GM12878 (cell line): ENCODE measurements at regions of chr15 and their contacts with region 1.

Region 1: GRCh38 chr15:62125773-62126172 is 39.3 kb downstream of the C2CD4B start:
- DNase-seq: no peak
- ATAC-seq: no peak
- H3K4me3 ChIP-seq: no peak overlapping the region
- H3K27ac ChIP-seq: no peak overlapping the region
- H3K4me1 ChIP-seq: no peaks in the 10 kb centered on the region
- H3K27me3 ChIP-seq: no peaks in the 10 kb centered on the region
- CTCF ChIP-seq: 0 out of 6 replicates have a peak, but pooled peaks of 1 of the 3 experiments have one; percentile 8
- EP300 ChIP-seq: no peak
- POLR2A ChIP-seq: no peak
- RAD21 ChIP-seq: no peak

Region 2: DNA sequence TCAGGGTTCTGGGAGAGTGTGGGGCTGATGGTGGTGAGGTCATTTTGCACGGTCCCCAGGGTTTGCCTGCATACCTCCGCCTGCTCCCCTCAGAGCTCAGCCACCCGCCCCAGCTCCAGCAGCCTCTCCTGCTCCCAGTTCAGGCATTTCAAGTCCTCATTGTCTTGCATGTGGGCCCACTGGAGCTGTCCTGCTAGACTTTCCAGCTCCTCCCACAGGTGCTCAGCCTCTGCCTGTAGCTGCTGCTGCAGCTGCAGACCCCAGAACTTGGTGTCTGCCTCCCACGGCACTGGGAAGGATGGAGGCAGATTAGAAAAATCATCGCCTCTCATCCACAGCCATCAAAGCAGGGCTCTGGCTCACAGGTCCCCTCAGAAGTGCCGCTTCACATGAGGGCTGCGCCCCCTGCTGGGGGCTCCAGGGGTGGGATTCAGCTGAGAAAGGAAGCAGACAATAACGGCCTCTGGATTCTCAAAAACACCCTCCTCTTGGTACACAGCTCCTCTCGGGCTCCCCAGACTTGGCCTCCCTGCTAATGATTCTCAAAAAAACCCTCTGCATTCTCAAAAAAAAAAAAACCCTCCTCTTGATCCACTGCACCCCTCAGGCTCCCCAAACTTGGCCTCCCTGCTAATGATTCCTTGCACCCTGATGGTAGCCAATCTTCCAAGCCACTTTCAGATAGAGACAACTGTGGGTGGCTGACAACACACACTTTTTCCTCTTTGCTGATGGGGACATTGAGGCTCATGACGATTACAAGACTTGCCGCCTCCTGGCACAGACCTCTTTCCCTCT is 128.6 kb after region 1 on chr15:
- CTCF ChIA-PET with region 1: interaction called, 11 read pairs
- POLR2A ChIA-PET with region 1: no interaction called
- RAD21 ChIA-PET with region 1: no interaction called
- SMC1A ChIA-PET with region 1: no interaction called
- in situ Hi-C with region 1: no loop called
- intact Hi-C with region 1: no loop called
- DNase-seq: no peak
- ATAC-seq: peak; percentile 83
- H3K4me3 ChIP-seq: no peak overlapping the region
- H3K27ac ChIP-seq: no peak overlapping the region
- H3K4me1 ChIP-seq: no peaks in the 10 kb centered on the region
- H3K27me3 ChIP-seq: no peaks in the 10 kb centered on the region; a peak in 1 of 4 replicates
- CTCF ChIP-seq: peak; percentile 48 to 73 (median 58)
- EP300 ChIP-seq: no peak
- POLR2A ChIP-seq: no peak
- RAD21 ChIP-seq: peak; percentile 47